ENCODE measurements at regions of chr5 and their contacts with region 1.

Region 1: GRCh38 chr5:54867310-54867944 is 118.0 kb downstream of the ESM1 start:
- DNase-seq: peak; percentile 41 to 50
- ATAC-seq: peak in 1 of 2 experiments; percentile 67; a peak in 3 of 6 replicates
- H3K4me3 ChIP-seq: no peak overlapping the region
- H3K27ac ChIP-seq: no peak overlapping the region
- H3K4me1 ChIP-seq: no peaks in the 10 kb centered on the region
- CTCF ChIP-seq: peak; percentile 70
- EP300 ChIP-seq: no peak
- POLR2A ChIP-seq: no peak
- RAD21 ChIP-seq: peak; percentile 57 to 63

Region 2: DNA sequence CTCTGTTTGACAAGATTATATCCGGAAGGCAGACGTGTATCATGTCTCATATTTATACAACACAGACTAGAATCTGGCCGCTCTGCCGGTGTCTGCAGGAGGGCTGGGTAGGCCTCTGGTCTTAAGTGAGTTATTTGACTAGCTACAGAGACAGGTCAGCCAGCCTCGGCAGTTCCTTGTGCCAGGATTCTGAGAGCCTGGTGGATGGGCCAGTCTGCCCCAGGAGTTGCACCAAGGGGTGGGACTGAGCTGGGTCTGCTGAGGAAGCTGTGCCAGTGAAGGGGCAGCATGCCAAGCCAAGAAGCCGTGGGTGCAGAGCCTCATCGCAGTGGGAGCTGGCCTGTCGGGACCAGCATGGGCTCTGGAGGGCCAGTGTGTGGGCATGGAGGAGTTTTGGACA is 342.7 kb before region 1 on chr5:
- CTCF ChIA-PET with region 1: interaction called, 55 read pairs
- POLR2A ChIA-PET with region 1: no interaction called
- DNase-seq: no peak
- ATAC-seq: no peak
- H3K4me3 ChIP-seq: no peak overlapping the region
- H3K27ac ChIP-seq: no peak overlapping the region
- H3K4me1 ChIP-seq: no peaks in the 10 kb centered on the region; the same call in 2 of the 3 replicates
- CTCF ChIP-seq: no peak
- EP300 ChIP-seq: no peak
- POLR2A ChIP-seq: no peak
- RAD21 ChIP-seq: no peak

Region 3: GRCh38 chr5:54844905-54845566 is 22.4 kb before region 1 on chr5:
- CTCF ChIA-PET with region 1: interaction called, 14 read pairs
- POLR2A ChIA-PET with region 1: no interaction called
- DNase-seq: peak in 1 of 2 experiments; percentile 35
- ATAC-seq: peak in 1 of 2 experiments; percentile 54; a peak in 1 of 6 replicates
- H3K4me3 ChIP-seq: no peak overlapping the region
- H3K27ac ChIP-seq: no peak overlapping the region
- H3K4me1 ChIP-seq: no peaks in the 10 kb centered on the region
- CTCF ChIP-seq: peak; percentile 72
- EP300 ChIP-seq: no peak
- POLR2A ChIP-seq: no peak
- RAD21 ChIP-seq: peak; percentile 64 to 79

Region 4: GRCh38 chr5:54883374-54884212 is 16.2 kb after region 1 on chr5:
- CTCF ChIA-PET with region 1: interaction called, 15 read pairs
- POLR2A ChIA-PET with region 1: no interaction called
- DNase-seq: no peak
- ATAC-seq: peak in 1 of 2 experiments; percentile 66; a peak in 3 of 6 replicates
- H3K4me3 ChIP-seq: peak overlapping the region; percentile 40
- H3K27ac ChIP-seq: peak overlapping the region in 1 of 2 experiments; percentile 59; a peak in 2 of 6 replicates
- H3K4me1 ChIP-seq: no peaks in the 10 kb centered on the region
- CTCF ChIP-seq: no peak
- EP300 ChIP-seq: no peak
- POLR2A ChIP-seq: no peak
- RAD21 ChIP-seq: no peak

Region 5: DNA sequence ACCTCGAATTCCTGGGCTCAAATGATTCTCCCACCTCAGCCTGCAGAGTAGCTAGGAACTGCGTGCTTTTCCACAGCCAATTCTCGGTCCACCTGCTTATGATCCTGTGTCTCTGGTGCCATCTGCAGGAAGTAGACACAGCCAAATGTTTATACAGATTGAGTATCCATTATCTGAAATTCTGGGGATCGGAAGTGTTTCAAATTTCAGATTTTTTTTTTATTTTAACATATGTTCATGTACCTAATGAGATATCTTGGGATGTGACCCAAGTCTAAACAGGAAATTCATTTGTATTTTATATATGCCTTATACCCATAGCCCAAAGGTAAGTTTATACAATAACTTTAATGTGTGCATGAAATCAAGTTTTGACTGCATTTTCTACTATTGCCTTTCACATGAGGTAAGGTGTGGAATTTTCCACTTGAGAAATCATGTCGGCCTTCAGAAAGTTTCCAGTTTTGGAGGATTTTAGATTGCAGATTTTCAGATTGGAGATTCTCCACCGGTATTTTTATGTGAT is 28.5 kb after region 1 on chr5:
- CTCF ChIA-PET with region 1: interaction called, 18 read pairs
- POLR2A ChIA-PET with region 1: no interaction called
- DNase-seq: peak; percentile 14 to 49
- ATAC-seq: peak; percentile 85 to 89
- H3K4me3 ChIP-seq: no peak overlapping the region
- H3K27ac ChIP-seq: no peak overlapping the region
- H3K4me1 ChIP-seq: no peaks in the 10 kb centered on the region
- CTCF ChIP-seq: peak; percentile 52
- EP300 ChIP-seq: no peak
- POLR2A ChIP-seq: no peak
- RAD21 ChIP-seq: peak; percentile 55 to 62; a peak in 4 of 5 replicates

Measured in A549 (cell line).